ENCODE measurements at regions of chr3 and their contacts with region 1.

Region 1: DNA sequence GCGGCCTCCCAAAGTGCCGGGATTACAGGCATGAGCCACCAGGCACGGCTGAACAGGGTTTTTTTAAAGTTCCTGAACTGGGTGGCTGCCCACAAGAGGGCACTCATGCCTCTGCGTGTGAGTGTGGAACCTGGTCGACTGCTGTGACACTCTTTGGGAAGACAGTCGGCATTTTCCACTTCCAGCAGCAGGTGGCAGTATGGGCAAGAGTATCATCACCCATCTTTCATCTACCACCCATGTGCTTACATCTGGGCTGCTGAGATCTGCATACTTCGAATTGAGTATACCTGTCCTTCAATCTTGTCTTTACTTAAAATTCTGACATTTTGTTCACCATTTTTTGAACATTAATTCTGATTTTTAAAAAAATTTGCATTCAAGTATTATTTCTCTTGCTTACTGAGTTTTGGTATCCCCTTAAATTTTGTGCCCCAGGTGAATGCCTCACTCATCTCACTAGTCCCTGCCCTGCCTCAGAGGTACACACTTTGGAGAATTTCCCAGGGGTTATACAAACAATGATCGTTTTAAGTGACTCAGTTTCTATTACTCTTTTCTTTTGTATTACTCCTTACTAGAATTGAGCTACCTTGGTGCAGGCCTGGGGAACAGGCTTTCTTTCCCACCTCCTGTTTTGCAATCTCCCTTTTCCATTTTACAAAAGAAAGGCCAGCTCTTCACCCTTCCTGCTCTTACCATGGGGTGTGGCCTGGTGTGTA is 11.8 kb downstream of the CLEC3B start:
- DNase-seq: peak; percentile 95
- ATAC-seq: peak; percentile 84
- H3K4me3 Mint-ChIP-seq: no peak overlapping the region
- H3K27ac Mint-ChIP-seq: no peak overlapping the region
- H3K4me1 Mint-ChIP-seq: peaks cover 45% of the 10 kb centered on the region
- H3K27me3 Mint-ChIP-seq: peaks cover 15% of the 10 kb centered on the region

Region 2: DNA sequence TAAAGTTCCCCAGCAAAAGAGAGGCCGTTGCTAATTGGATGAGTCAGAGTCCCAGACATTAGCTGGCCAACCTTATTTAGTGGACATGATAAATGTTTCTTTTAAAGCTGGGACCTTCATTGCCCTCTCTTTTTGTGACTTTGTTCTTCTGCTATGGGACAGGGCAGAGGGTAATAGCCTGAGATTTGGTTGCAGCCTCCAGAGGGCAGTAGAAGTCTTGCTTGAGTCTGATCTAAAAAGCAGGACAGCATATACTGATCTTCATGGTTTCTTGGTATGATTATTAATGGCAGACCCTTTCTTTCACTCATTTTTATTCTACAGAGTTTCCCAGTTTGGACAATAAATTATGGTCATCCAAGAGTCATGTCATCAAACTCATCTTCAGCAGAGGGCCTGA is 508.0 kb before region 1 on chr3:
- CTCF ChIA-PET with region 1: no interaction called
- POLR2A ChIA-PET with region 1: no interaction called
- intact Hi-C with region 1: loop called in 1 of 2 experiments (anchors 10 kb)
- DNase-seq: peak; percentile 53
- ATAC-seq: no peak
- H3K4me3 Mint-ChIP-seq: no peak overlapping the region
- H3K27ac Mint-ChIP-seq: no peak overlapping the region
- H3K4me1 Mint-ChIP-seq: no peaks in the 10 kb centered on the region
- H3K27me3 Mint-ChIP-seq: peaks cover 7% of the 10 kb centered on the region

Region 3: GRCh38 chr3:45012577-45012976 is 25.3 kb before region 1 on chr3:
- CTCF ChIA-PET with region 1: no interaction called
- POLR2A ChIA-PET with region 1: no interaction called
- intact Hi-C with region 1: no loop called
- DNase-seq: no peak
- ATAC-seq: no peak
- H3K4me3 Mint-ChIP-seq: no peak overlapping the region
- H3K27ac Mint-ChIP-seq: no peak overlapping the region
- H3K4me1 Mint-ChIP-seq: peaks cover 2% of the 10 kb centered on the region
- H3K27me3 Mint-ChIP-seq: no peaks in the 10 kb centered on the region

Region 4: DNA sequence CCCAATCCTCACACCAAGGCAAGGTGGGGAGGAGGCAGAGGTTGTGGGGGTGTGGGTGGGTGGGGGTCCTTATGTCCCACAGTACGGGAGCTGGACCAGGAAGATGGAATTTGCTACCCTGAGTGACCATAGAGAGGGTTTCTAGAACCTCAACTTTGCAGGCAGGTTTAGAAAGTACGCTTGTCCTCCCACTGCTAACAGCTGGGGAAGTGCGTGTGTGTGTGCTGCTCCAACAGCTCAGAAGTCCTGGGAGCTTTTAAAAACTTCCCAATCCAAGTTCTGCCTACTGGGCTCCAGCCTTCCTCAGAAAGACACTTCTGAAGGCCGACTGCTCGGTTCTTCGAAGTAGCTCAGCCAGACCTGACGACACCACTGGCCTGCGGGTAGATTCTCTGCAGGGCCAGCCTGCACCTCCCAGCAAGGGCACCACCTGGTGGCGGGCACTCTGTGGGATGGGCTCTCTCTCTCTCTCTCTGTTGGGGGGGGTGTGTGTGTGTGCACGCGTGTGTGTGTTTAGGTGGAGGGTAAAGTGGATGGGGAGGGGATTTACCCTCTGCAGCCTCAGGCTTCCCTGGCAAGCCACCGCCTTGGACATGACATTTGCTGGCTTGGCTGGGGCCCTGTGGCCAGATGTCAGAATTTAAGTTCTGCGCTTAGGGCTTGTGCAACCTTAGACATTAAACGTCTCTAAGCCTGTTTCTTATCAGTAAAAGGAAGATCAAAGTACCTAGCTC is 172.6 kb after region 1 on chr3:
- CTCF ChIA-PET with region 1: interaction called, 210 read pairs
- POLR2A ChIA-PET with region 1: interaction called, 3 read pairs
- intact Hi-C with region 1: loop called (anchors 1 kb)
- DNase-seq: peak; percentile 90
- ATAC-seq: peak; percentile 91
- H3K4me3 Mint-ChIP-seq: no peak overlapping the region
- H3K27ac Mint-ChIP-seq: no peak overlapping the region
- H3K4me1 Mint-ChIP-seq: peaks cover 28% of the 10 kb centered on the region
- H3K27me3 Mint-ChIP-seq: peaks cover 10% of the 10 kb centered on the region

Region 5: DNA sequence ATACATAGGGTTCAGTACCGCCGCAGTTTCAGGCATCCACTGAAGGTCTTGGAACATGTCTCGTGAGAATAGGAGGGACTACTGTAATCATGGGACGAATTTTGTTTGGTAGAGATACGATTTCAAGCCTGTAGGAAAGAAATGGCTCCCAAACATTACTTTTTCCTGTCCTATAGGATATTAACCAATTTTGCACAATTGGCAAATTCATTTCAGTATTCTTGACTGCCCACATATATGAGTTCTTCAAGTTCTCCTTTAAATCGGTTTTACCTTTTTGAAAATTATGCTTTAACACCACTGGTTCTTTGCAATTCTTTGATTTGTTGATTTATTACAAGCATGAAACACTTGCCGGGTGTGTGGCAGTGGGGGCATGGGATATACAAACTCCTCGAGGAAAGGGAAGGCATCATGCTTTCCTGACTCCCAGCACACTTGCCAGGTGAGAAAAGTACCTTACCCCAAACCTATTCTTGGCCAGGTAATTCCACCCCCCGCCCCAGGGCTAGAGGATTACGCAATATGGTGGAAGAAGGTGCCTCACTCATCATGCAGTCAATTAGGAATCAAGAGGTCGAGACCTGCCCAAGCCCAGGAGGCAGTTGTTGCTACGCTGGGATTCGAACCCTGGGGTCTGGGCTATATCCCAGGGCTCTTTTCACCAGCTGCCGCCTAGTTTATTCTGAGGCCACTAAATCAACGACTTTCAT is 349.9 kb after region 1 on chr3:
- CTCF ChIA-PET with region 1: interaction called, 3 read pairs
- POLR2A ChIA-PET with region 1: no interaction called
- intact Hi-C with region 1: loop called in 1 of 2 experiments (anchors 1 kb)
- DNase-seq: no peak
- ATAC-seq: peak; percentile 8
- H3K4me3 Mint-ChIP-seq: peak overlapping the region; percentile 85
- H3K27ac Mint-ChIP-seq: peak overlapping the region; percentile 51
- H3K4me1 Mint-ChIP-seq: peaks cover 13% of the 10 kb centered on the region
- H3K27me3 Mint-ChIP-seq: peaks cover 1% of the 10 kb centered on the region

Region 6: DNA sequence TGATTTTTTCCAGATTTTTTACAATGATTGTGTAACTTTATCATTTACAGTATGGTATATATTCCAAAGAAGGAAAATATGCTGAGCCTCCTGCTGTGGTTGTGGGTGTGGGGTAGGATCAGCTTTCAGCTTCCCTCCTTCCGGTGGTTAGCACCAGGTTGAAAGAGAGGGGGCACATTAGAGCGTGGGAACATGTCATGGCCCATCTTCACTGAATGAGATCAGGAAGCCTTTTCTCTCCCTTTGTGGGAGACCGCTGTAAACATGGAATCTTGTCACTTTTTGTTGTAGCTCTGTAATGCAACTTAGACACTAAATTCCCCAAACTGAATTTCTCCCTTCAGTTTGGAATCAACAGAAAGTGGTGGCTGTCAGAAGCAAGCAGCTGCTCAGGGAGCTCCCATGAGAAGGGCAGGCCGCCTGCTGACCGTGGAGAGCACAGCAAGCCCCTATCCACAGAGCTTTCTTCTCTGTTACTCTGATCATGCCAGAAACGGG is 470.0 kb after region 1 on chr3:
- CTCF ChIA-PET with region 1: interaction called, 14 read pairs
- POLR2A ChIA-PET with region 1: no interaction called
- intact Hi-C with region 1: loop called (anchors 1 to 5 kb)
- DNase-seq: no peak
- ATAC-seq: no peak
- H3K4me3 Mint-ChIP-seq: no peak overlapping the region
- H3K27ac Mint-ChIP-seq: no peak overlapping the region
- H3K4me1 Mint-ChIP-seq: peaks cover 13% of the 10 kb centered on the region
- H3K27me3 Mint-ChIP-seq: no peaks in the 10 kb centered on the region

Region 7: GRCh38 chr3:45665101-45665572 is 627.2 kb after region 1 on chr3:
- CTCF ChIA-PET with region 1: interaction called, 8 read pairs
- POLR2A ChIA-PET with region 1: no interaction called
- intact Hi-C with region 1: loop called in 1 of 2 experiments (anchors 2 kb)
- DNase-seq: peak; percentile 76
- ATAC-seq: peak; percentile 23
- H3K4me3 Mint-ChIP-seq: peak overlapping the region; percentile 67
- H3K27ac Mint-ChIP-seq: peak overlapping the region; percentile 68
- H3K4me1 Mint-ChIP-seq: peaks cover 54% of the 10 kb centered on the region
- H3K27me3 Mint-ChIP-seq: no peaks in the 10 kb centered on the region